Panc1 (cell line): ENCODE measurements at regions of chr9 and their contacts with region 1.

Region 1: GRCh38 chr9:131237931-131238401 is 38.3 kb downstream of the FAM78A start:
- DNase-seq: no peak
- ATAC-seq: 0 out of 2 replicates have a peak, but pooled peaks have one; percentile 49
- H3K4me3 ChIP-seq: no peak overlapping the region
- H3K27ac ChIP-seq: no peak overlapping the region
- H3K4me1 ChIP-seq: no peaks in the 10 kb centered on the region; the same call in 1 of the 2 replicates
- H3K27me3 ChIP-seq: no peaks in the 10 kb centered on the region
- CTCF ChIP-seq: no peak

Region 2: DNA sequence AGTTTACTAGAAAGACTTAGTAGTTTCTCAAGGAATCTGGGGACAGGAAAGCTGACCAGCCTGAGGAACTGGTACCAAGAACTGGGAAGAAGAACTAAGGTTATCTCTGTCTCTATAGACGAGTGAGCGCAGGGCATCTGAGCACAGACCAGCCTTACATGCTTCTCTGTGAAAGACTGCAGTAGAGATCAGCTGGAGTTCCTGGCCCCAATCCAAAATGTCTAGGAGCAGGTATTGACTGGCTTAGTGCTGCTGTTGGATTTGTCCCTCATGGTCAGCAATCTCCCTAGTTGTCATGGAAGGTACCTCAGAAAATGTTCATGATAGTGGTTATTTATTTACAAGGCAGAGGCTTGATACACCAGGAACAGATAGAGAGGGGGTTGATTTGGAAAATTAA is 99.3 kb before region 1 on chr9:
- CTCF ChIA-PET with region 1: no interaction called
- POLR2A ChIA-PET with region 1: interaction called, 17 read pairs
- in situ Hi-C with region 1: no loop called
- intact Hi-C with region 1: no loop called
- DNase-seq: no peak
- ATAC-seq: no peak
- H3K4me3 ChIP-seq: no peak overlapping the region
- H3K27ac ChIP-seq: no peak overlapping the region
- H3K4me1 ChIP-seq: no peaks in the 10 kb centered on the region
- H3K27me3 ChIP-seq: no peaks in the 10 kb centered on the region
- CTCF ChIP-seq: no peak